ENCODE measurements at regions of chr1 and their contacts with region 1.

Region 1: GRCh38 chr1:183218971-183219615 is 33.0 kb downstream of the LAMC2 start:
- DNase-seq: peak; percentile 76
- H3K4me3 Mint-ChIP-seq: no peak overlapping the region
- H3K27ac Mint-ChIP-seq: peak overlapping the region; percentile 10
- H3K4me1 Mint-ChIP-seq: peaks cover 19% of the 10 kb centered on the region
- H3K27me3 Mint-ChIP-seq: no peaks in the 10 kb centered on the region

Region 2: DNA sequence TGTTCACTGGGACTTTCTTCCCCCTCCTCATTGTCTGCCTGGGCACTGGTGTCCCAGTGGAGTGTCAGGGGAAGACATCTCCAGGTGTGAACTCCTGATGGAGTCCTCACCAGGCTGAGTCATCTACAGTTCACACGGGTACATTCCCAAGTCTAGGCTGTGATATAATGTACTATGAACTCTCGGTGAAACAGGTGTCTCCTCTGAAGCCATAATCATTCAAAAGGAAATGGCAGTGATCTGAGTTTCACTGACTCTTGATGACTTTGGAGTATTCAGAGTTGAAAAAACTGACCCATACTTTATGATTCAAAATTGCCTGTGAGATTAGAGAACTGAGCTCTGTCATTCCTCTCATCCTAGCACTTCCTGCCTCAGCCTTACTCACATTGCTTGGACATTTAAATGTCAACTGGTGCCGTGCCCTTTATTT is 23.9 kb before region 1 on chr1:
- CTCF ChIA-PET with region 1: interaction called, 5 read pairs
- intact Hi-C with region 1: loop called (anchors 2 kb)
- DNase-seq: no peak
- H3K4me3 Mint-ChIP-seq: no peak overlapping the region
- H3K27ac Mint-ChIP-seq: no peak overlapping the region
- H3K4me1 Mint-ChIP-seq: peaks cover 12% of the 10 kb centered on the region
- H3K27me3 Mint-ChIP-seq: peaks cover 5% of the 10 kb centered on the region

Measured in activated naive CD4-positive, alpha-beta T cell treated with anti-CD3 and anti-CD28 coated beads for 36 hours (primary cell).